ENCODE measurements at regions of chr13 and their contacts with region 1.

Region 1: GRCh38 chr13:42991892-42992763 is at the start of gene EPSTI1:
- DNase-seq: peak; percentile 79
- H3K4me3 Mint-ChIP-seq: peak within 1 kb of the TSS; percentile 93
- H3K27ac Mint-ChIP-seq: peak within 1 kb of the TSS; percentile 96
- H3K4me1 Mint-ChIP-seq: peaks cover 64% of the 10 kb centered on the region
- H3K27me3 Mint-ChIP-seq: no peaks in the 10 kb centered on the region
- total RNA-seq, gene EPSTI1: 10.3 and 11.9 TPM in 2 replicates

Region 2: DNA sequence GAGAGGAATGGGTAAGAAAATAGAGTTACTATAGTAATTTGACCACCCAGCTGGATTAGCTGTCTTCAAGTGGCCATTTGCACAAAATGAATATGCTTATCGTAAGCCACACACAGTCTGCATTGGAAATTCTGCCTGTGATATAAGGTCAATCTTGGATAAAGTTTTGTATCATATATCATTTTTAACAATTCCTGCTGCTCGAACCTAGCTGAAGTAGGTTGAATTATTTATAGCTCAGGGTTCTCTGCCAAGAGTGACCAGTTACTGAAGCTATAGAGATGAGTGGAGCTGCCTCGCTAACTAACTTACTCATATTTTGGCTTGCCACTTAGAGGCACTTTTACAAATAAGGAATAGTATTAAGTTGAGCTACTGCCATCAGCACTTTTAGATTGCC is 1313.9 kb before region 1 on chr13:
- intact Hi-C with region 1: no loop called
- DNase-seq: no peak
- H3K4me3 Mint-ChIP-seq: no peak overlapping the region
- H3K27ac Mint-ChIP-seq: no peak overlapping the region
- H3K4me1 Mint-ChIP-seq: peaks cover 2% of the 10 kb centered on the region
- H3K27me3 Mint-ChIP-seq: no peaks in the 10 kb centered on the region

Region 3: DNA sequence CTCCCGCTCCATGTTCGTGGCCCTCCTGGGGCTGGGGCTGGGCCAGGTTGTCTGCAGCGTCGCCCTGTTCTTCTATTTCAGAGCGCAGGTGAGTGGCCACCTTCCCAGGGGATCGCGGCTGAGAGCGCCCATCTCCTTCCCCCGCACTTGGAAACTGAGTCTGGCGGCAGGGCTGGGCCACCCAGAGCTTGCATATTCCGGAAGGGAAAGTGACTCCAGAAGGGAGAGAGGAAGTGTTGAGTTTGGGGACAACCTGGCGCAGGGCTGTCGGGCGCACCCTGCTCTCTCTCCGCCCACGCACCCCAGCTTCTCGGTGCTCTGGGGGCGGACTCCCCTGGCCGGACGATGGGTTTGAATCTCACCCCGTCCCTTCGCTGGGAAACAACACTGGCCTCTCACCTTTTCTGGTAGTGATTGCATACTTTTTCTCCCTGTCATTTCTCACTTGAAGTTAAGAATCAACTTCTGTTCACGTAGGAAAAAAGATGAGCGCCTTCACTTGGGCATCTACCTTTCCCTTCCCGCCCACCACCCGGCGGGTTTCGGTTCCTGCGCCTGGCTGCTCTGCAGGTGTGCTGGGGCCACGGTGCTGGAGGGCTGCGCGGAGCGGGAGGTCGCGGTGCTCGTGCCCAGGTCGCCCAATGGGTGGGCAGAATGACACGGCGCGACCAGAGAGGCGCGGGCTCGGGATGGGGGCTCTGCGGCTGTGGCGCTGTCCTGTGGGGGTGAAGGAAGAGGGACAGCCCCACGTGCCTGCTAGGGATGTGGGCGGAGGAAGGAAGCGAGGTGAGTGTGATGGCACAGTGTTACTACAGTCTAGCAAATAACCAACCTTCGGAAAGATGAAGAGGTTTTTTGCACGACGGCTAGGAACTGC is 417.5 kb before region 1 on chr13:
- intact Hi-C with region 1: loop called (anchors 5 kb)
- DNase-seq: peak; percentile 30
- H3K4me3 Mint-ChIP-seq: peak overlapping the region; percentile 74
- H3K27ac Mint-ChIP-seq: peak overlapping the region; percentile 75
- H3K4me1 Mint-ChIP-seq: peaks cover 43% of the 10 kb centered on the region
- H3K27me3 Mint-ChIP-seq: peaks cover 5% of the 10 kb centered on the region

Region 4: GRCh38 chr13:43023289-43023951 is 31.3 kb after region 1 on chr13 and contains the start of gene DNAJC15:
- intact Hi-C with region 1: loop called (anchors 2 kb)
- DNase-seq: peak; percentile 77
- H3K4me3 Mint-ChIP-seq: peak within 1 kb of the TSS; percentile 91
- H3K27ac Mint-ChIP-seq: peak within 1 kb of the TSS; percentile 81
- H3K4me1 Mint-ChIP-seq: peaks cover 16% of the 10 kb centered on the region
- H3K27me3 Mint-ChIP-seq: no peaks in the 10 kb centered on the region
- total RNA-seq, gene DNAJC15: 18.0 and 18.8 TPM in 2 replicates

Region 5: GRCh38 chr13:43041369-43041921 is 49.3 kb after region 1 on chr13:
- intact Hi-C with region 1: loop called (anchors 2 kb)
- DNase-seq: no peak
- H3K4me3 Mint-ChIP-seq: no peak overlapping the region
- H3K27ac Mint-ChIP-seq: no peak overlapping the region
- H3K4me1 Mint-ChIP-seq: peaks cover 40% of the 10 kb centered on the region
- H3K27me3 Mint-ChIP-seq: no peaks in the 10 kb centered on the region

Region 6: DNA sequence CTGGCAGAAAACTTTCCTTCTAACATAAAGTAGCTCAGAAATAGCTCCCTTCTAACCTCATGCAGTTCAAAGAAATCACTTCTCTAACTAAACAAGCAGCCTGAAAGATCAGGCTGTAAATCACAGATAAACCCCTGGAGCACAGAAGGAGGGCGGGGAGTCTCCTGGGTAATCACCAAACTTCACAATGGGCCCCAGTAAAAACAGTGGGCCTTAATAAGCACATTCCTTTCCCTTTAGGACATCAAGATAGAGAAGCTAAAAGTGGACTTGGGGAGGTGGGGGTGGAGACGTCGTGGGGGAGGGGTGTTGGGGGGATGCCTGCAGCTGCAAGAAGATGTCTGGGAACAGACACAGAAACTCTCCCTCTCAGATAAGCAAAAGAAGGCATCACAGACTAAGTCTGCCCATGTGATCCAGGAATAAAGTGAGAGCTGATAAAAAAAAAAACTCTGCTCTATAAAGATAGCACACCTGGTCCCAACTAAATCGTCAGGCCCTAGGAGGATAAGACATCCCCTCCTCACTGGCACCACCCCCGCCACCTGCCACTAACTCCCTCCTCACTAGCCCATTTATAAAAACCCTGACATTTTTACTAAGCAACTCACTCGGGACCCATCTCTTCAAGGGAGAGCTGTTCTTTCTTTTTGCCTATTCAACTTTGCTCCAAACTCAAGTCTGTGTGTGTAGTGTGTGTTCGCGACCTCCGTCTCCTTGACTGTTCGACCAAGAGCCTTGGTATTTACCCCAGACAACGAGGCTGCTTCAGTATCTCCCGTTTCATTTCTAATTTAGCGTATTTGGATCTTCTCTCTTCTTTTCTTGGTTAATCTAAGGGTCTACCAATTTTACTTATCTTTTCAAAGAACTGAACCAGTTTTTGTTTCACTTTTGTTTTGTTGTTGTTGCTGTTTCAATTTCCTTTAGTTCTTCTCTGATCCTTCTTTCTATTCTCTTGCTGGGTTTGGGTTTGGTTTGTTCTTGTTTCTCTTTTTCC is 63.0 kb after region 1 on chr13:
- intact Hi-C with region 1: loop called (anchors 2 kb)
- DNase-seq: no peak
- H3K4me3 Mint-ChIP-seq: no peak overlapping the region
- H3K27ac Mint-ChIP-seq: no peak overlapping the region
- H3K4me1 Mint-ChIP-seq: peaks cover 35% of the 10 kb centered on the region
- H3K27me3 Mint-ChIP-seq: no peaks in the 10 kb centered on the region

Measured in activated T-helper 2 cell treated with anti-CD3 and anti-CD28 coated beads, Interferon-gamma antibody, Interleukin-2, Interleukin-4, amounts not matched to agents 10 μg/mL and 5 μg/mL and 100 μg/mL, durations not matched to agents 14 hours and 24 hours and 36 hours (primary cell).